ENCODE measurements at regions of chr7 and their contacts with region 1.

Region 1: DNA sequence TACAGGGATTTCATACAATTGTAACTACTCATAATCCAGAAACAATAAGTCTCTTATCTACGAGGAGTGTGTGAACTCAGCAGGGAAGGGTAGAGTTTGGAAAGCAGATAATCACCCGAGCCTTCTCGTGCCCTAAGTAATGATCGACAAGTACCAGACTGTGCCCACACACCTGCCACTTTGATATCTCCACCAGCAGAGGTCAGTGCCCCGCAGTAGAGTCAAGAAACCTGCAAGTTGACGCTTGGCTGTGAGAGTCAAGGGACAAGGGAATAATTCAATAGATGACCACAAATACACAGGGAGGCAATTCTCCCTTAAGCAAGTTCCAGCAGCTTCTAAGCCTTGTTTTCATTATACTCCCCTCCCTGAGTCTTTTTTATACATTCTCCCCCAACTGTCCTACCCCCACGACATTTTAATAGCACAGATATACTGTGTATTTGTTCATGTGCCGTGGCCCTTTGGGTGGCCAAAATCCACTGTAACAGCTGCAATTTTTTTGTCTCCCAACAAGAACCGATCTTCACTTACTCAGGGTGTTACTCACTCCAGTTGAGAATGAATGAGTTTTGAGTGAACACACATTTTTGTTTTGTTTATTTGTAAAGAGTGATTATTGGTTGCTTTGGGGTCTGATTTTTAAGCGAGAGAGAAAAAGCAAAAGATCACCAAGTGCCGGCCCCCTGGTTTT is 106.9 kb upstream of the RHEB start:
- DNase-seq: peak; percentile 46 to 57
- ATAC-seq: peak; percentile 86 to 91
- H3K4me3 ChIP-seq: no peak overlapping the region
- H3K27ac ChIP-seq: no peak overlapping the region
- H3K4me1 ChIP-seq: peaks cover 10 to 13% of the 10 kb centered on the region in 2 donors
- H3K27me3 ChIP-seq: no peaks in the 10 kb centered on the region
- CTCF ChIP-seq: peak; percentile 53 to 79 (median 69)
- POLR2A ChIP-seq: no peak

Region 2: DNA sequence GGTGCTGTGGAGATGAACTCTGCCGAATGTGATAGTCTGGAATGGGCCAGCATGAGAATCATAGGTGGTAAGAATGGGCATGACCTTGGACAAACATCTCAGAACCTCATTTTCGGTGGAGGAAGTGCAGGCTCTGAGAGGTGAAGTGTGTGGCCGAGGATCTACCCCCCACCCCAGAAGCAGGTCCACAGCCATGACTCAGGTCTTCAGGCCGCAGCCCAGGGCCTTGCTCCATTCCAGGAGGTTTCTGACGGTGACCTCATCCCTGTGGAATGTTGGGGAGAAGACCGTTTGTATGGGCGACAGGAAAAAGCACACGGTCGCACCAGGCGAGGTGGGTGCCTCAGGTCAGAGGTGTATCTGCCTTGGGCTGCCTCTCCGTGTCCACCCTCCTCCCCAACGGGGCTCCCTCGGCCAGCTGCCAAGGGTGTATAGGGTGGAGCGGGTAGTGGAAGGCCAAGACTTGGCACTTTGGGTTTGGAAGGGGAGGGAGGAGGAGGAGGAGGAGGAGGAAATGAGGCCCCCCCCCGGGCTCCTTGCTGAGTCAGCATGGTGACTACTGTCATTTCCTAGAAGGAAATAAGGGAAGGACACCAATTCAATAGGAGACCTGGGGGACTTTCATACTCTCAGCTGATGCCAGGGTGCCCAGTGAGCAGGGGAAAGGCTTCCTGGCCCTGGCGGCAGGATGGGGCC is 61.1 kb after region 1 on chr7:
- in situ Hi-C with region 1: loop called in 1 of 4 experiments (anchors 10 kb)
- intact Hi-C with region 1: loop called (anchors 5 kb)
- DNase-seq: peak; percentile 40 to 69
- ATAC-seq: peak; percentile 48 to 79
- H3K4me3 ChIP-seq: no peak overlapping the region
- H3K27ac ChIP-seq: peak overlapping the region; percentile 44 to 66 (median 54)
- H3K4me1 ChIP-seq: peaks cover 14 to 18% of the 10 kb centered on the region in 2 donors
- H3K27me3 ChIP-seq: no peaks in the 10 kb centered on the region
- CTCF ChIP-seq: no peak
- POLR2A ChIP-seq: no peak

Region 3: GRCh38 chr7:151769188-151769841 is 142.7 kb after region 1 on chr7:
- in situ Hi-C with region 1: loop called in 3 of 4 experiments (anchors 5 to 10 kb)
- intact Hi-C with region 1: no loop called
- DNase-seq: no peak
- ATAC-seq: no peak
- H3K4me3 ChIP-seq: no peak overlapping the region
- H3K27ac ChIP-seq: no peak overlapping the region
- H3K4me1 ChIP-seq: no peaks in the 10 kb centered on the region
- H3K27me3 ChIP-seq: no peaks in the 10 kb centered on the region
- CTCF ChIP-seq: no peak
- POLR2A ChIP-seq: no peak

Region 4: DNA sequence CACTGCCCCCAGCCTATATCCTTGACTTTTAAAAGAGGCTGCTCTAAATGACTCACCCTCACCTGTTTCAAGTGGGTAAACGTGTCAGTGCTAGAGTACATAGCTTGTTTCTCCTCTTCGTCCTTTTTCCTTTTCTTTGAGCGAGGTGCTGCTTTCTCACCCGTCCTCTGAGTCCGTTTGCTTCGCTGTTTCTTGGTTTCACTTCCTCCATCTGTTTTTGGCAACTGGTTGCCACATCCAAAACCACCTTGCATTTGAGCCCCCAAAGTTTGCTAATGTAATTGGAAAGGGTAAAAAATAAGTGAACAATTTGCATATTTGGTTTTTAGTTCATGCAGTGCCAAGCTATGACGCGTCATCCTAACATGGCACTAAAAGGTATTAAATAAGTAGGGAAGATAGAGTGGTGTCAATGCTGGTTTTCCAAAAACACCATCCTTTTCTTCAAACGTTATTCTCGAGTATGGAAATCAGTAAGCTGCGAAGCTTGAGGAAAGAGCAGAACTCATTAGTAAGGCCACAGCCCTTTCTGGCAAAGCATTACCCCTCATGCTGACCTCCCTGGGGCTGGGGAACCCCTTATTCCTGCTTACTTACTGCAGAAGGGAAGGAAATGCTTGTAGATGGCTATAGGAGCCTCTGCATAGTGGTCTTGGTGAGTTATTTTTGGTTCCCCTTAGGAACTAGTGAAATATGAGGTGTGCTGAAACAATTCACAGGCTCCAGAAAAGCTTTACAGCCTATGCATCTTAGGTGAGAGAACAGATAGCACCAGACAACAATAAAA is 532.4 kb after region 1 on chr7:
- in situ Hi-C with region 1: no loop called
- intact Hi-C with region 1: no loop called
- DNase-seq: no peak
- ATAC-seq: no peak
- H3K4me3 ChIP-seq: no peak overlapping the region
- H3K27ac ChIP-seq: no peak overlapping the region
- H3K4me1 ChIP-seq: no peaks in the 10 kb centered on the region
- H3K27me3 ChIP-seq: no peaks in the 10 kb centered on the region
- CTCF ChIP-seq: no peak
- POLR2A ChIP-seq: no peak

Measured in gastrocnemius medialis (tissue), 4 donors.